ENCODE measurements at regions of chr10 and their contacts with region 1.

Region 1: GRCh38 chr10:5889624-5890451 is at the starts of genes ANKRD16 and FBH1:
- DNase-seq: peak; percentile 99
- total RNA-seq, gene ANKRD16: 3.9 TPM
- total RNA-seq, gene FBH1: 73.8 TPM

Region 2: DNA sequence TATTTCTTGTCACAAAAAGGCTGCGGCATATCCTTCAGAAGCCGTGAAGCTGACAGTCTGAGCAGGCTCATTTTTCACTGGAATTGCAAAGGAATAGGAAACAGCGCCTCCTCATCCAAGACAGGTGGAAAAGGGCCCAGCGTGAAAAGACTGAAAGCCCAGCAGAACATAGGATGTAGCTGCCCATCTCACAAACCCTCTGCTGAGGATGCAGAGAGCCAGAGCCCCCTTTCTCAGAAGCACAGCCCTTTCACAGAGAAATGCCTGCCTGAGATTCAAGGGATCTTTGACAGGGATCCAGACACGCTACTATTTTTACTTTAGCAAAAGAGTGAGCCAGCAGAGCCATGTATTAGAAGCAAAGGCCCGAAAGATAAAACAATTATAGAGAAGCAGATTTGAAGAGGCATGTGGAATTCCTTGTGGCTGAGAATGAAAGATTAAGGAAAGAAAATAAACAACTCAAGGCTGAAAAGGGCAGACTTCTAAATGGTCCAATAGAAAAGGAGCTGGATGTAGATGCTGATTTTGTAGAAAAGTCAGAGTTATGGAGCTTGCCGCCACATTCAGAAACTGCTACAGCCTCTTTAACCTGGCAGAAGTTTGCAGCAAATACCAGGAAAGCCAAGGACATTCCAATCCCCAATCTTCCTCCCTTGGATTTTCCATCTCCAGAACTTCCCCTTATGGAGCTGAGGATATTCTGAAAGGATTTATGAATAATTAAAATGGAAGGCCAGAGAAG is 113.5 kb before region 1 on chr10:
- intact Hi-C with region 1: no loop called
- DNase-seq: no peak

Region 3: DNA sequence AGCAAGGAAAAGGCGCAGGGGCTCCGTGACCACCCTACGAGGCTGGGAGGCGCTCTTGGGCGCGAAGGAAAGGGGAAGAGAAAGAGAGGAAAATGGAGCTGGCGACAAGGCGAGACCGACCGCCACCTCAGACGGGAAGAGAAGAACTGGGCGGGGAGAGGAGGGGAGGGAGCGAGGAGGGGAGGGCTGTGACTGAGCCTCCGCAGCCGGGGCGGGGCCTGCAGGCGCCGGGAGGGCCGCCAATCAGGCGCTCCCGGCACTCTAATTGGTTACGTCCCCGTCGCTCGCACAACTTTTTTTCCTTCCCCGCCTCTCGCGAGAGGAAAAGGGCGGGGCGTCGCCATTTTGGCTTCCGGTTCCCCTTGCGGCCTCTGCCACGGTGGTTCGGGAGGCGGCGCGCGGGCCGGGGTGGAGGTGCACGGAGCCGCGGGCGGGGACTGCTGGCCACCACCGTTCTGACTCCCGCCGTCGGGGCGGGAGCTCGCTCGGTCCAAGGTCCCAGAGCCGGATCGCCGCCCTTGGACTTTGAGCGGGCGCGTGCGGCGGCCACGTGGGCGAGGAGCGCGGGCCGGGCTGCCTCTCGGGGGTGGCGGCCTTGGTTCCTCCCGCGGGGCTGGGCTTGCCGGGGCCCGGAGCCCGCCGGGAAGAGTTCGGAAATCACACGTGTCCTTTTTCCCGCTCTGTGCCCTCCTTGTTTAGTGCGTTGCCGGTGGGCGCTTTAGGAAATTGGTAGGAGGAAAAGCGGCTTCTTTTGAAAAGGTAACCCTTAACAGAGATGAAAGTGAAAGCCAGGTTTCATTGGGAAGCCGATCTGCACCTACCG is 76.3 kb before region 1 on chr10 and contains the start of gene GDI2:
- intact Hi-C with region 1: loop called (anchors 1 kb)
- DNase-seq: peak; percentile 98
- total RNA-seq, gene GDI2: 107 TPM

Measured in cardiac septum (tissue), 1 donor.